BJ (cell line): ENCODE measurements at regions of chr11 and their contacts with region 1.

Region 1: DNA sequence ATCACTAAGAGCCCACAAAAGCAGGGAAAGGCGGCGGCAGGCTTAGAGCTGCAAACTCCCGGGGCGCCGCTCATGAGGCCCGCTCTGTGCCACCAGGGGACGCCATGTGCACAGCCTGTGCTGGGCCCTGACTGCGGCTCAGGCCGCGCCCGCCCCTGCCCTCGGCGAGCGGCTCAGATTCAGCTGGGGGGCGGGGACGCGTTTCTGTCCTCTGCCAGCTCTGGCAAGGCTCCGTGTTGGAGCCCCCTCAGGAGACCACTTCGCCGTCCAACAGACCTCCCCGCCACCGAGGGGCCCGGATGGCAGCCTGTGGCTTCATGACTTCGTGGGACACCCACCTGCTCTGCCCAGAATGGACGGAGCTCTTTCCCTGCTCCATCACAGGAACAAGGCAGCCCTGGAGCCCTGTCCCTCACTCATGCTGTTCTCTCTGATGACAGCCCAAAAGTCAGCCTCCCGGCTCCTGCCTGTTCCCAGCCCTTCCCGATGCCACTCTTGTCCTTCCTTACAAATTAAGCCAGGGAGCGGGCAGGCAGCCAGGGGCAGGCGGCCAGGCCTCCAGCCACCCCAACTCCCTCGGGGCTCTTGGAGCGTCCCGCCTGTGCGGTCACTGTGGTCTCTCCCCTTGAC is 69.1 kb downstream of the NAT10 start:
- DNase-seq: no peak
- H3K4me3 ChIP-seq: peak overlapping the region; percentile 16; the same call in 1 of the 2 replicates
- H3K27me3 ChIP-seq: no peaks in the 10 kb centered on the region
- CTCF ChIP-seq: peak; percentile 99

Region 2: DNA sequence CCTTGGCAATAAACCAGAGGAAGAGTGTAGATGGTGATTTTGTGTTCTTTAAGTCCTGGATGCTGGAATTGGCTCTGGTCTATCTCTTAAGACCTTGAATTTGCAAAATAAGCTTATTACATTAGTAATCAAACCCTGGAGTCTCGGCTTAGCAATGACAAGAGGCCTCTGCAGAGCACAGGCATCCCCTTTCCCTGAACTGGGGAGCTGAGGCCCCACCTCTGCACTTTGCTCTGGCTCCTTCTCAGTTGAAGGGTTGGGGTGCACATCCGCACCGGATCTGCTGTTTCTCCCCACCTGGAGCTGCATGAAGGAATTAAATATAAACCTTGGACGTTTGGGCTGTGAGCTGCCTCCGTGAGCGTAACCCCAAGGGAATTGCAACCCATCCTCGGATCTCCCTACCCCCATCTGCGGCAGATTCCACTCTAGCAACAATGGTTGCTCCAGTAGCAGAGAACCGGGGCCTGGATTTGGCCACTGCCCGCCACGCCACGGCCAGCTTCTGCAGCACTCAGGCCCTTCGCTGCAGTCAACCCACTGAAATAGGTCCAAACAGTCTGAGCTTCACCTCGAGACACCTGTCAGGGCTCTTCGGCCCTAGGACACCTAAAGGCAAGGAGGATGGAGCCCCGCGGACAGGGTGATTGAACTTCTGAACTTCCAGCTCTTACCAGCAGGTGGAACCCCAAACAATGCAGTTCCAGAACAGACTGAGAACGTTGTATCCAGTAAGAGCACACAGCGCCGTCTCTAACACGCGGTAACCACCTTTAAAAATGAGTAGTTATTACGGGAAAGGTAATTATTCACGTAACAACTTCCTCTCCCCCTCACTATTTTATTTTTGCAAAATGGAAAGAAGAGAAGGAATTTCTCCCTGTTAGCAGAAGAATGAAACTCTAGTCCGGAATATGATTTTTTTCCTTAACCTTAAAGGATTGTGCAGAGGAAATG is 177.8 kb before region 1 on chr11:
- CTCF ChIA-PET with region 1: interaction called, 20 read pairs
- POLR2A ChIA-PET with region 1: no interaction called
- DNase-seq: no peak
- H3K4me3 ChIP-seq: no peak overlapping the region
- H3K27me3 ChIP-seq: no peaks in the 10 kb centered on the region
- CTCF ChIP-seq: peak; percentile 83

Region 3: GRCh38 chr11:34037016-34037415 is 137.5 kb before region 1 on chr11:
- CTCF ChIA-PET with region 1: no interaction called
- POLR2A ChIA-PET with region 1: no interaction called
- DNase-seq: no peak
- H3K4me3 ChIP-seq: no peak overlapping the region
- H3K27me3 ChIP-seq: 0 out of 2 replicates have a peak, but pooled peaks cover 2% of the 10 kb centered on the region
- CTCF ChIP-seq: no peak

Region 4: GRCh38 chr11:34149786-34150185 is 24.7 kb before region 1 on chr11:
- CTCF ChIA-PET with region 1: interaction called, 10 read pairs
- POLR2A ChIA-PET with region 1: no interaction called
- DNase-seq: no peak
- H3K4me3 ChIP-seq: no peak overlapping the region
- H3K27me3 ChIP-seq: no peaks in the 10 kb centered on the region
- CTCF ChIP-seq: peak; percentile 57

Region 5: GRCh38 chr11:34185926-34186841 is 11.7 kb after region 1 on chr11:
- CTCF ChIA-PET with region 1: interaction called, 19 read pairs
- POLR2A ChIA-PET with region 1: interaction called, 13 read pairs
- DNase-seq: no peak
- H3K4me3 ChIP-seq: no peak overlapping the region
- H3K27me3 ChIP-seq: no peaks in the 10 kb centered on the region
- CTCF ChIP-seq: no peak

Region 6: DNA sequence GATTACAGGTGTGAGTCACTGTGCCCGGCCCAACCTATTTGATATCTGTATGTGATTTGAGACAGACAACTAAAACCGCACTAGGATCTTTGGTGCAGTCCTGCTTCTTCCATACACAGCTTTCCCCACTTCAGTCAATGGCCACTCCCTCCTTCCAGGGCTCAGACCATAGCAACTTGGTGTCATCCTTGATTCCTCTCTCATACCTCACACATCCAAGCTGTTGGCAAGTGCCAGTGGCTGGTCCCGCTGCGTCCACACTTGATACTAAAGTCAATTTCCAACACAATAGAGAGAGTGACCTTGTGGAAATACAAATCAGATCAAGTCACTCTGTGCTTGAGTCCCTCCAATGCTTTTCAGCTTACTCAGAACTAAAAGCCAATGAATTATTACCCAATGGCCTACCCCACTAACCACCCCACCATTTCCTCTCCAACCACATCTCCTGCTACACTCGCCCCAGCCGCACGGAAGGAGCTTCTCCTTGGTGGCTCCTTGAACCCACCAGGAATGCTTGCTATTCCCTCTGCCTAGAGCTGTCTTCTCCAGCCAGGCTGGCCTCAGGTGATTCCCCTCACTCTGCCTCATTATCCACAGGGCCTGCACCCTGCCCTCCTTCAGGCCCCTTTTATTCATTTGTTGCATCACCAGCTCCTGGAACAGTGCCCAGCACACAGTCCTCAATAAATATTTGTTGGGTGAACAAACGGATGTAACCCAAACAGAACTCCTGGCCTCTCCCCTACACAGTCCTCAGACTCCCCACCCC is 170.4 kb after region 1 on chr11:
- CTCF ChIA-PET with region 1: interaction called, 45 read pairs
- POLR2A ChIA-PET with region 1: no interaction called
- DNase-seq: peak; percentile 88
- H3K4me3 ChIP-seq: no peak overlapping the region
- H3K27me3 ChIP-seq: no peaks in the 10 kb centered on the region
- CTCF ChIP-seq: no peak

Region 7: DNA sequence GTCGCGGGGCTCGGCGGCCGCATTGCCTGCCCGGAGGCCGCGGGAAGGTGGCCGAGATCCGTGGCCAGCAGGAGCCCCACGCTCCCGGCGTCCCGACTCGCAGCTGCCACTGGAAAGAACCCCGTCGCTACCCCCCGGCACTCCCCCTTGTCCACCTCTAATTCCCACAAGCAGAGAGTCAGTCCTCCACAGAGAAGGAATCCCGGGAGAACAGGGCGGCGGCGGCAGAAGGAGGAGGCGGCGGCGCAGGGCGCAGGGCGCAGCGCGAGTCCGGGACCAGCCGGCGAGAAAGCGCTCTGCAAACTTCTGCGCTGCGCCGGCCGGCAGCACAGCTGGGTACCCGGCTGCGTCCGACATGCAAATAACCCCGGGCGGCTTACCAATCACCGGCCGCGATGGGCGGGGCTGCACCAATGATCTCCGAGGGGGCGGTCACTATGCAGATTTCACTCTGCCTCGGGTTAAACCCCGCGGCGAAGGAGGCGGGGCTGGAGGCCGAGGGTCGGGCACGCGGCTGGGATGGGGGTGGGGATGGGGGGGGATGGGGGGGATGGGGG is 183.3 kb after region 1 on chr11 and contains the start of gene ABTB2:
- CTCF ChIA-PET with region 1: interaction called, 112 read pairs
- POLR2A ChIA-PET with region 1: no interaction called
- DNase-seq: peak; percentile 77
- H3K4me3 ChIP-seq: peak within 1 kb of the TSS; percentile 61
- H3K27me3 ChIP-seq: no peaks in the 10 kb centered on the region; the same call in 1 of the 2 replicates
- CTCF ChIP-seq: no peak
- polyA plus RNA-seq, gene ABTB2: 2.8 and 6.3 TPM in 2 replicates

Region 8: GRCh38 chr11:34366522-34366921 is 192.0 kb after region 1 on chr11:
- CTCF ChIA-PET with region 1: interaction called, 29 read pairs
- POLR2A ChIA-PET with region 1: no interaction called
- DNase-seq: no peak
- H3K4me3 ChIP-seq: no peak overlapping the region
- H3K27me3 ChIP-seq: peaks cover 3% of the 10 kb centered on the region
- CTCF ChIP-seq: peak; percentile 28; the same call in 1 of the 2 replicates

Region 9: GRCh38 chr11:34395916-34396550 is 221.5 kb after region 1 on chr11:
- CTCF ChIA-PET with region 1: no interaction called
- POLR2A ChIA-PET with region 1: no interaction called
- DNase-seq: no peak
- H3K4me3 ChIP-seq: no peak overlapping the region
- H3K27me3 ChIP-seq: no peaks in the 10 kb centered on the region
- CTCF ChIP-seq: no peak